ENCODE measurements at regions of chr10 and their contacts with region 1.

Region 1: DNA sequence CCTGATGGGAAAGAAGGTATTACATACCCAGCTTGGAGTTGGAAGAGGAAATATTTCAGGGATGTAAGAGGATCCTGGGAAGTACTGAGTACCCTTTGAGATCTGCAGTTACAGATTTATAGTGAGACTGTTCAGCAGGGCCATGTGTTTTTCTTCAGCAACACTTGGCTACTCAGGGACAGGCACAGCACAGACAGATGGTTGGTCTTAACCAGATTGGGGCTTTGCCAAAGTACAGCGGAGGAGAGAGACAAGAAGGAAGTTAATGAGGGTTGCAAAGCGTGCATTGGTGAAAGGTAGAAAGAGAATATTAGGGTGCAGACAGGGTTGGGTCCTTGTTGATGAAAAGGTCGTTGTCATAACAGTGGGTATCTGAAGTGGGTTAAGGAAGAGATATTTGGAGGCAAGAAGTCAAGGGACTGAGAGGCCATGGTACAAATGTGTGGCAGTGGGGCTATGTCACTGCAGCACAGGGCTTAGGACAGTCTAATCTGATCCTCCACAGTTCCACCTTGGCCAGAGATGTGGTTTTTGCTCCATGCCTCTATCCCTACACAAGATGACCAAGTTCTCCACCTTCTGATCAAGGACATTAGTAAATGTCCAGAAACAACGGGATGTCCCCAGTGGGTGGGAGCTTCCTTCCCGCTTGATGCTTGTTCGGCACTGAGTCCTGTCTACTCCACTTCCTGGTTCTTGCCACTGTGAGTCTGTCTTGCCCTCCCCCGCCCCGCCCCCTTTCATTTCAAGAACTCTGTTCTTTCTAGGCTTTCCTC is 18.9 kb upstream of the DNAJC1 start:
- DNase-seq: no peak
- H3K4me3 ChIP-seq: no peak overlapping the region
- H3K27ac ChIP-seq: peak overlapping the region in 1 of 4 donors; percentile 41
- H3K4me1 ChIP-seq: peaks cover 0 to 17% (median 11%) of the 10 kb centered on the region in 4 donors
- H3K27me3 ChIP-seq: no peaks in the 10 kb centered on the region
- CTCF ChIP-seq: no peak
- EP300 ChIP-seq: peak in 1 of 4 donors; percentile 63
- POLR2A ChIP-seq: no peak

Region 2: DNA sequence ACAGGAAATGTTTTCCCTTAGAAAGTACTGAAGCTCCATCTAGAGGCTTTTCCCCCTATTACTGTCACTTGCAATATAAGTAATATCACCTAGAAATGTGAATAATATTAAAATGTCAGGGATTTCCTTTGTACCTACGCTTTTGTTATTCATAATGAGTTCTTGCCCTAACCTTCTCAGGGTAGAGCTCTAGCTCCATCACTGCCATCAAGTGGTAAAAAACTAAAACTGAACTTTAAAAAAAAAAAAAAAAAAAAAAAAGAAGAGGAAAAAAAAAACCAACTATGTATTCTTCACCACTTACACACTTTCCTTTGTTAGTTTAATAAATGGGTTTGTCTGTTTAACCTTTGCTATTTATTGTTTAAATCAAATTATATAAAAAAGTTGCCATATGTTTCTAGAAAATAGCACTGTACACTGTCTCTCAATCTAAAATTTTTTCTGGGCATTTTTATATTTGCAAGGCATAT is 68.8 kb before region 1 on chr10:
- intact Hi-C with region 1: no loop called
- DNase-seq: no peak
- H3K4me3 ChIP-seq: no peak overlapping the region
- H3K27ac ChIP-seq: no peak overlapping the region
- H3K4me1 ChIP-seq: peaks cover 0 to 12% (median 2%) of the 10 kb centered on the region in 4 donors
- H3K27me3 ChIP-seq: no peaks in the 10 kb centered on the region
- CTCF ChIP-seq: no peak
- EP300 ChIP-seq: no peak
- POLR2A ChIP-seq: no peak

Region 3: DNA sequence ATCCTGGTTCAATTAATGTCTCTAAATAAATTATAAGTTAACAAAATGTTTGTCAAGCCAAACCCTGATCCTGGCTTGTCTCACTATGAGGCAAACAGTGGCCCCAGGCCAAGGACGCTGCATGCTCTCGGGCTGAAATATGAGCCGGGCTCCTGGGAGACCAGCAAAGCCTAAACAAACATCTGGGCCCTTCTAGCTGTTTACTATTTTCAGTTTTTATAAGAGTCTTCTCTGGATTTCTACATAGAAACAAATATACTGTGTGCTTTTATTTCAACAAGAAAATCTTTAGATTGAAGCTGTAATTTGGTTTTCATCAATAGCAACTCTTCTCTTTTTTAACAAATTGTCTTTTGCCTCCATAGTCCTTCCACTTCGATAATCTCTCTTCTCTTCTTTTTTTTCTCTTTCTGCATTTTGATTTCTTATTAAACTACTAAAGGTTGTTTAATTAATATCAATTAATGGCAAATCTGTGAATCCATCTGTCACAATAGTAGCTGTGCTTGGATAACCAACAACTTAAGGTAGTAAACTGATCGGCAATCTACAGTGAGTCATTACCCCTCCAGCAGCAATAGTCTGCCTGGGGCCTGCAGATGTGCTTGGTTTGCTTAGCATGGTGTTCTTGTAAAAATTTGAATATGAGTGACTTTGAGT is 64.4 kb after region 1 on chr10:
- intact Hi-C with region 1: loop called (anchors 5 kb)
- DNase-seq: peak; percentile 90
- H3K4me3 ChIP-seq: no peak overlapping the region
- H3K27ac ChIP-seq: peak overlapping the region; percentile 18 to 59 (median 48)
- H3K4me1 ChIP-seq: peaks cover 0 to 15% (median 10%) of the 10 kb centered on the region in 4 donors
- H3K27me3 ChIP-seq: no peaks in the 10 kb centered on the region
- CTCF ChIP-seq: no peak
- EP300 ChIP-seq: peak in 1 of 4 donors; percentile 14
- POLR2A ChIP-seq: no peak